HAP-1 (cell line): ENCODE measurements at regions of chr13 and their contacts with region 1.

Region 1: GRCh38 chr13:52194184-52194868 is 34.9 kb upstream of the NEK3 start:
- DNase-seq: peak; percentile 63 to 90
- H3K4me3 ChIP-seq: peak overlapping the region; percentile 83
- H3K4me1 ChIP-seq: no peaks in the 10 kb centered on the region; the same call in 1 of the 2 replicates
- H3K27me3 ChIP-seq: no peaks in the 10 kb centered on the region

Region 2: DNA sequence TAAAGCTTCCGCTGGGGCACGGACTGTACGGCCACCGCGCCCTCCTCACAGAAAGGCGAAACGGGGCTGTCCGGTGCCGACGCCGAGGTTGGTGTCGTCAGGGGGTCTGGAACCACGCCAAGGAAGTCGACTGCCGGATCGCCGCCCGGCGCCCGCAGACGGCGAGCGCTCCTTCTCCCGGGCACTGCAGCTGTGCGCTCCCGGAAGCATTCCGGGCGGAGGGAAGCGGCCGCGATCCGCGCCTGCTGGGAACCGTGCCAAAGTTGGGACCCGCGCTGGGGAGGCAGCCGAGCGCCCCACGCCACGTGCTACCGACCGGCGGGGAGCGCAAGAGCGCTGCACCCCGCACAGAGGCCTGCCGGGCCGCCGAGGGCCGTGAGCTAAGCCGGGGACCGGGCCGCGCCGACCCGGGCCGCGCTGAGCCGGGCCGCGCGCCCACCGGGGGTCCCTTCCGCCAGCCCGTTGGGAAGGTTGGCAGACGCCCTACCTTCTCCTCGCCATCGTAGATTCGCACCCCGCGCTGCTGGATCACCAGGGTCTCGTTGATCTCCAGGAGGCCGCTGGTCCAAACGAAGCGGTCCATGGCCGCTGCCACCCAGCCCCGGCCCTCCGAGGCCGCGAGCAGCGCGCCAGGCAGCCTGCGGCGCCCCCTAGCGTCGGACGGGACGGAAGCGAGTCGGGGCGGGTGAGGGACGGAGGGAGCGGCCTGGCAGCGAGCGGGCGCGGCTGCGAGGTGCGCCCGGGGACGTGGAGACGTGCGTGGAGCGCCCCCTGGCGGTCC is 255.9 kb after region 1 on chr13 and contains the start of gene VPS36:
- in situ Hi-C with region 1: loop called (anchors 25 kb)
- DNase-seq: peak; percentile 88 to 96
- H3K4me3 ChIP-seq: peak within 1 kb of the TSS; percentile 64
- H3K4me1 ChIP-seq: peaks cover 3% of the 10 kb centered on the region; the same call in 1 of the 2 replicates
- H3K27me3 ChIP-seq: no peaks in the 10 kb centered on the region